Activated CD4-positive, alpha-beta memory T cell treated with anti-CD3 and anti-CD28 coated beads for 36 hours (primary cell): ENCODE measurements at regions of chr12 and their contacts with region 1.

Region 1: DNA sequence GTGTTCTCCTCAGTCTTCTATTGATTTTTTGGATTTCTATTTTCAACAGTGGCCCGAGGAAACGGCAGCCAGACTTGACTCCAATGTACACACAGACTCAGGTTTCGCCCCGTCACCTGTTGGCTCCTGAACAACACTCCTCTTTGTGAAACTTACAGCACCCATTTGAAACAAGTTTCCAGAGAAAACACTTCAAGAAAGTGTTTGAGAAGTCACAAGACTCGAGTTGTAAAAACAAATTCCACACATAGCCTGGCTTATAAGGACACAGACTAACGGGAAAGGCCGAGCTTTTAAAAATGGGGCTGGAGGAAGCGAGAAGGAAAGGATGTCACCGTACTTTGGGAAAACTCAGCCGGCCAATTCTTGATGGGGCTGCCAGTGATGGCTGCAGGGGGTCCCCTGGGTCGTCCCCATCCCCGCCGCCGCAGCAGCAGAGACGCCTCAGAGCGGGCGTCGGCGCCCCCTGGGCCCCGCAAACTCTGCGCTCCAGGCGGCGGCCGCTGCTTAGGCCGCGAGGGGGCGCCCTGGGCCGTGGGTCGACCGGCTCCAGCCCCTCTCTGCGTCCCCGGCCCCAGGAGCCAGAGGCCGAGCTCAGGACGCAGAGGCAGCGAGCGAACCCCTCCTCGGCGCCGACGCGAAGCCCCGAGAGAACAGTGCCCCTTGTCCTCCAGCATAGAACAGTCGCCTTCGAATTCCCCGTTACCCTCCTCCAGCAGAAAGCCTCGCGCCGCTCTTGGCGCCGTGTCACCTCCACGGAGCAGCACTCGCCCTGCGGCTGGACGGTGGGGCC is 106.9 kb downstream of the PRICKLE1 start:
- DNase-seq: peak; percentile 54
- H3K4me3 Mint-ChIP-seq: peak overlapping the region; percentile 70
- H3K27ac Mint-ChIP-seq: no peak overlapping the region
- H3K4me1 Mint-ChIP-seq: peaks cover 14% of the 10 kb centered on the region
- H3K27me3 Mint-ChIP-seq: peaks cover 60% of the 10 kb centered on the region

Region 2: GRCh38 chr12:42469355-42470175 is 13.1 kb before region 1 on chr12:
- CTCF ChIA-PET with region 1: interaction called, 10 read pairs
- POLR2A ChIA-PET with region 1: no interaction called
- intact Hi-C with region 1: no loop called
- DNase-seq: no peak
- H3K4me3 Mint-ChIP-seq: no peak overlapping the region
- H3K27ac Mint-ChIP-seq: no peak overlapping the region
- H3K4me1 Mint-ChIP-seq: peaks cover 10% of the 10 kb centered on the region
- H3K27me3 Mint-ChIP-seq: peaks cover 31% of the 10 kb centered on the region

Region 3: DNA sequence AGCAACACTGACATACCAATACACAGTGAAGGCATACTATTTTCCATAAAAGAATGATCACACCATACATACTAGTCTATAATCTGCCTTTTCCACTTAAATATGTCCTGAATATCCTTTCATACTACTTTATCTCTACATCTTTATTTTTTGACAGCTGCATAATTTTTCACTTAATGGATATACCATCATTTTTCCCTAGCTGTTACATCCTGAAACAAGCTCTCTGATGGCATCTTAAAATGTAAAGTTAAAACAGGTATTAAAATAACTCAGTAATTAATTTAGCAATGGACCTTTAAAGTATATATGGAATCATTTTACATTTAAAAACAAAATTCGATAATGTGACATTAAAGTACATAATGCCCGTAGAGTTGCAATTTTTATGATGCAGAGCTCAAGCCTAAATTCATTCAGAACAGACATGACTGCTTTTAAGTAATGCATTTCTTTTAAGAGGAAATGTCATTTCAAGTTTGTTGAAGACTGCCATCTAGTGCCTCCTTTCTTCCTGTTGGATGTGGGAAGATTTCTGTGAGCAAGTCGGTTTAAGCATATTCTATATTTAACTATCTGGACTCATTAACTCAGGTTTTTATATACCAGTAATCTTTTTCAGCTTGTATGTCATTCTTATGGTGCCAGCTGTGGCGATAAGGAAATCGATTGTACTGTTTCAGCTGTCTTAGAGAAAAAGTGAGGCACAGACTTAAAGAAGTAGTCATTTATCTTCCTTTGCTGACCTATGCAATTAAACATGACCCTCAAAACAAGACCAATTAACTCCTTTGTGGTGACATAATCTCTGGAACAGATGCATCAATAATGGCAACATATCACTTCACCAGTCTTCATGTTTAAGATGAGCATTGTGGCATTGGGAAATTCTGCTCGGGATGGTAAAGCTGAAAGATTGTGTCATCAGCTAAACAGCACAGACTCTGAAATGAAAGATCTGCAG is 86.6 kb after region 1 on chr12:
- CTCF ChIA-PET with region 1: interaction called, 23 read pairs
- POLR2A ChIA-PET with region 1: no interaction called
- intact Hi-C with region 1: loop called (anchors 1 kb)
- DNase-seq: no peak
- H3K4me3 Mint-ChIP-seq: no peak overlapping the region
- H3K27ac Mint-ChIP-seq: no peak overlapping the region
- H3K4me1 Mint-ChIP-seq: no peaks in the 10 kb centered on the region
- H3K27me3 Mint-ChIP-seq: peaks cover 3% of the 10 kb centered on the region

Region 4: GRCh38 chr12:43338848-43339526 is 856.3 kb after region 1 on chr12:
- CTCF ChIA-PET with region 1: no interaction called
- POLR2A ChIA-PET with region 1: no interaction called
- intact Hi-C with region 1: loop called (anchors 5 kb)
- DNase-seq: no peak
- H3K4me3 Mint-ChIP-seq: no peak overlapping the region
- H3K27ac Mint-ChIP-seq: no peak overlapping the region
- H3K4me1 Mint-ChIP-seq: no peaks in the 10 kb centered on the region
- H3K27me3 Mint-ChIP-seq: no peaks in the 10 kb centered on the region